ENCODE measurements at regions of chr6 and their contacts with region 1.

Region 1: DNA sequence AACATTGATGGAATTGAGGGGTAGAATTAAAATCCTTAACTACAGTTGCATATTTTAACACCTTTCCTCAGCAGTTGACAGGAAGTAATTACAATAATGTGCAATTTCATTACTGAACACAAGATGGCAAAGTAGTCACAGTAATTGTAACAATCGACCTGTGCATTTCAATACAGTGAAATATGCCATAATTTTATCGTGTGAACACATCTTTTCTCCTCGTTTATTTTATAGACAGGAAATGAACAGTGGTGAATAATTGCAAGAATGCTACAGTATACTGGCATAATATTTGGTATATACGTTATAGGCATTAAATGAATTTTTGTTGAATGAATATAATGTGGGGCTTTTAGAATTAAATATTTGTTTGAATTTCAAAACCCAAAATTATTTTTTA is 25.0 kb downstream of the CYB5R4 start:
- DNase-seq: peak in 3 of 14 experiments; percentile 63 to 65 (median 65)
- ATAC-seq: peak; percentile 74
- H3K4me3 ChIP-seq: no peak overlapping the region
- H3K4me3 Mint-ChIP-seq: no peak overlapping the region
- H3K27ac ChIP-seq: no peak overlapping the region
- H3K27ac Mint-ChIP-seq: no peak overlapping the region
- H3K4me1 ChIP-seq: no peaks in the 10 kb centered on the region
- H3K4me1 Mint-ChIP-seq: peaks cover 25% of the 10 kb centered on the region
- H3K27me3 ChIP-seq: no peaks in the 10 kb centered on the region
- H3K27me3 Mint-ChIP-seq: no peaks in the 10 kb centered on the region
- CTCF ChIP-seq: peak; percentile 87

Region 2: DNA sequence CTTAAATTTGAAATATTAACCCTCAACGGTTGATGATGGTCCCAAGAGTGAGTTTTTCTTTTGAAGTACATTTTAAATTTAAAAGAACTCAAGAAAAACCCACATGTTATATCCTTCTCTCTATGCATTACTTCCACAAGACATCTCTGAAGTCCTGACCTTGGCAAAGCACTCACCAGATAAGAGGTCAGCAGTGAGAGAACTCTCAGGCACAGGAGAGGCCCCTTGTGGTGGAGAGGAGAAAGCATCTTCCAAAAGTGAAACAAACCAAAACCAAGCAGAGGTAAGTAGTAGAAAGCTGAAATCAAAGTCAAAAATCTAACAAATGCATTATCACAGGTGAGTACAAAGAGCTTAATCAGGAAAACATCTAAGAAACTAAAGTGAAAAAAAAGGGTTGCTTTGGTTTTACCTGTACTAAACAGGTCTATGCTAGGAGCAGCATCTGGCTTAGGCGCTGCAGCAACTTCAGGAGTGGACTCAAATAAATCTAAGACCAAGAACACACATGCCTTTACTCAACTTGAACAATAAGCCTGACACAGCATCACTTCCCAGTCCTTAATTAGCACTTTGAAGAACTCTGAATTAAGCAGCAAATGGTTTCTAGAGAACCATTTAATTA is 291.6 kb before region 1 on chr6:
- CTCF ChIA-PET with region 1: no interaction called
- POLR2A ChIA-PET with region 1: no interaction called
- intact Hi-C with region 1: no loop called
- DNase-seq: peak in 3 of 14 experiments; percentile 7 to 8 (median 8)
- ATAC-seq: no peak
- H3K4me3 ChIP-seq: no peak overlapping the region
- H3K4me3 Mint-ChIP-seq: no peak overlapping the region
- H3K27ac ChIP-seq: no peak overlapping the region
- H3K27ac Mint-ChIP-seq: no peak overlapping the region
- H3K4me1 ChIP-seq: no peaks in the 10 kb centered on the region
- H3K4me1 Mint-ChIP-seq: no peaks in the 10 kb centered on the region
- H3K27me3 ChIP-seq: no peaks in the 10 kb centered on the region
- H3K27me3 Mint-ChIP-seq: no peaks in the 10 kb centered on the region
- CTCF ChIP-seq: peak; percentile 30

Region 3: GRCh38 chr6:84220809-84221409 is 336.4 kb after region 1 on chr6:
- CTCF ChIA-PET with region 1: no interaction called
- POLR2A ChIA-PET with region 1: no interaction called
- intact Hi-C with region 1: loop called (anchors 2 kb)
- DNase-seq: peak in 3 of 14 experiments; percentile 17 to 33 (median 32)
- ATAC-seq: no peak
- H3K4me3 ChIP-seq: no peak overlapping the region
- H3K4me3 Mint-ChIP-seq: no peak overlapping the region
- H3K27ac ChIP-seq: no peak overlapping the region
- H3K27ac Mint-ChIP-seq: no peak overlapping the region
- H3K4me1 ChIP-seq: no peaks in the 10 kb centered on the region
- H3K4me1 Mint-ChIP-seq: peaks cover 4% of the 10 kb centered on the region
- H3K27me3 ChIP-seq: no peaks in the 10 kb centered on the region
- H3K27me3 Mint-ChIP-seq: no peaks in the 10 kb centered on the region
- CTCF ChIP-seq: peak; percentile 67

Region 4: DNA sequence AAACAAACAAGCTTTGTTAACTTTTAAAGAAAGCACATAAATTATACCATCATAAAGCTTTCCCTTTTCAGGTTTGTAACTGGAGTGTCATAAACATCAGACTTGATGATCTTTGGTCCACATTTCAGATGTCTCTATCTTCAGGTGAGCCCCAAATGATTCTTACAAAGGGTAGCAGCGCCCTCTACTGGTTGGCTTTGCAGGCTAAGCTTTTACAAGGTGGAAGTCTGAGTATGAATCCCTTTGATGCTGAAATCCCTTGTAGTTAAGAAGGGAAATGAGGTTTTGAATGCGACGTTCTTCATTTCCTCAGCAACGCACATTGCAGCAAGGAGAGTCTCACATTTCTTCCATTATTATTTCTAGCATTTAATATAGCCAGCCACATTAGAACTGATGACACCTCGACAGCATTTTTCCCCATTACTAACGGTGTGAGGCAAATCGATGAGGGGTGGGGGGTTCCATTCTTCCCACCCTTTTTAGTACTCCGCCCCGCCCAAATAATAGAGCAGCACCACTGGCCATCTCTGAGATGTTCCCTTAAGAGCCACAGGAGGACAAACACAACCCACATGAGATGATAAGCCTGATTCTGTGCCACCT is 1439.0 kb after region 1 on chr6:
- CTCF ChIA-PET with region 1: no interaction called
- POLR2A ChIA-PET with region 1: no interaction called
- intact Hi-C with region 1: loop called in 1 of 2 experiments (anchors 5 kb)
- DNase-seq: peak; percentile 31 to 70 (median 48)
- ATAC-seq: peak; percentile 57
- H3K4me3 ChIP-seq: no peak overlapping the region
- H3K4me3 Mint-ChIP-seq: no peak overlapping the region
- H3K27ac ChIP-seq: no peak overlapping the region
- H3K27ac Mint-ChIP-seq: no peak overlapping the region
- H3K4me1 ChIP-seq: no peaks in the 10 kb centered on the region
- H3K4me1 Mint-ChIP-seq: no peaks in the 10 kb centered on the region
- H3K27me3 ChIP-seq: peaks cover 0 to 2% of the 10 kb centered on the region in 2 experiments
- H3K27me3 Mint-ChIP-seq: peaks cover 9% of the 10 kb centered on the region
- CTCF ChIP-seq: peak; percentile 69